Activated CD8-positive, alpha-beta memory T cell treated with anti-CD3 and anti-CD28 coated beads, Interleukin-2, amount 10 ng/mL, durations not matched to agents 7 days and 5 days (primary cell): ENCODE measurements at regions of chr6 and their contacts with region 1.

Region 1: DNA sequence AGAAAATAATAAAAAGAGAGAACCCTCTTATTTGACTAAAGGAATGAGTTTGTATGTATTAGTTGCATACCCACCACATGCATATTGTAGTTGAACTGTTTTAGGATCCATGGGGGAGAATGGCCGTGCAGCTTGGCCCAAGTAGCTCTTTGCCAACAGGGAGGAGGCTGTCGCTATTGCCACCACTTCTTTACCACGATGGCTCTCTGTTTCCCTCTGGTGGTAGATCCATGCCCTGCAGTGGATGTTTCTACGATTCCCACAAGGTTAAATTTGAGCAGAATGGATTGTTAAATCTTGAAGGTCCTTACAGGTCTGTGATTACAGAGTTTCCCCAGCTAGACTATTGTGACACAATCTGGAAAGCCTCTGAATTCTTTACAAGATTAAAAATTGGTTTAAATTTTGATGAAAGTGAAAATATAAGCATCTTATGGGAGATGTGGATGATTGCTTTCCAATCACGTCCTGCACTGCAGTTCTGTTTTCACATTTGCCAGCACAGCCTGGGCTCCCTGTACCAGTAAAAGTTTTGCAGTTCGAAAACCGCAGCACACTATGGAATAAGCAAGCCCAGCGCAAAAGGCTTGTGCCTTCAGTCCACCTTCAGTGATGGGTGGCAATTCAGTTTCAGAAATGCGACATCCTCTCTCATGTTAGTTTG is 34.4 kb upstream of the FNDC1 start:
- DNase-seq: peak; percentile 84
- ATAC-seq: peak; percentile 86
- H3K4me3 Mint-ChIP-seq: no peak overlapping the region
- H3K27ac Mint-ChIP-seq: no peak overlapping the region
- H3K4me1 Mint-ChIP-seq: peaks cover 7% of the 10 kb centered on the region
- H3K27me3 Mint-ChIP-seq: peaks cover 37% of the 10 kb centered on the region

Region 2: DNA sequence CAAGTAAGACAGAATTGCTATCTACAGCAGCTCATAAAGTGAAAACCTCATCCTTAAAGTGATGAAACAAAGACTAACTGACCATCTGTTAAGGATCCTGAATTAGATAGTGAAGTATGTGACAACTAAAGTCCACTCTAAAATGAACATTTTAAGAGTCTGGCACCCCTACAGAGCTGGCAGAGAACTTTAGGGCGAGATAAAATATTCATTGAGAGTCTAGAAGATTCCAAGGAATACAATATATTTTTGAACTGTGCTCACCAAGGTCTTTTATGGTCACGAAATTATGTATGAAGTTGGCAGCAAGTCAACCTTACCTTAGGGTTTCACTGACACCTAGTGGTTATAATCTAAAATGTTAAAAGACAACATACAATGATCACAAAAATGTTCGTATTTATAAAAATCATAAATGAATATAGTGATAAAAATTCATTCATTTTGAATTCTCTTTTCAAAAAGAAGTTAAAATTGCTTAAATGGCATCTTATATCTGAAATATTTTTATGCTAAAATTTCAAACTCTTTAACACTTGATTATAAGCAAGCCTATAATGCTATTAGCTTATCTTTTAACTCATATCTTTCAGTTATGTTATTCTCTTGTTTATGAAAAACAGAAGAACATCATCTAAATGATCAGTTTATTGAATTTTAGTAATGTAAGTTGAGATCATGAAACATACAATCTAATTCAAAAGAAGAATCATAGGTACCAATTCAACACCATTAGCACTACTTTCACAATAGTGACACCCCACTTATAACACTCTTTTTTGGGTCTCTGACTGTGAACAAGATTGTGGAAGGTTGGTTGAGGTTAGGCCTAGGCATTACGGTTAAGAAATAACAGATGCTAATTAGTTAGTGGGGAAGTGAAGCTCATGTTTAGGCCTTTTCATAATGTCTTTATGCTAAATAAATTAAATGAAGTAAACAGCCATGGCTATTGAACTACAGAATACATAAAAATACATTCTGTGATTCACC is 162.3 kb before region 1 on chr6:
- CTCF ChIA-PET with region 1: interaction called, 16 read pairs
- DNase-seq: no peak
- ATAC-seq: peak; percentile 55
- H3K4me3 Mint-ChIP-seq: no peak overlapping the region
- H3K27ac Mint-ChIP-seq: no peak overlapping the region
- H3K4me1 Mint-ChIP-seq: no peaks in the 10 kb centered on the region
- H3K27me3 Mint-ChIP-seq: no peaks in the 10 kb centered on the region

Region 3: DNA sequence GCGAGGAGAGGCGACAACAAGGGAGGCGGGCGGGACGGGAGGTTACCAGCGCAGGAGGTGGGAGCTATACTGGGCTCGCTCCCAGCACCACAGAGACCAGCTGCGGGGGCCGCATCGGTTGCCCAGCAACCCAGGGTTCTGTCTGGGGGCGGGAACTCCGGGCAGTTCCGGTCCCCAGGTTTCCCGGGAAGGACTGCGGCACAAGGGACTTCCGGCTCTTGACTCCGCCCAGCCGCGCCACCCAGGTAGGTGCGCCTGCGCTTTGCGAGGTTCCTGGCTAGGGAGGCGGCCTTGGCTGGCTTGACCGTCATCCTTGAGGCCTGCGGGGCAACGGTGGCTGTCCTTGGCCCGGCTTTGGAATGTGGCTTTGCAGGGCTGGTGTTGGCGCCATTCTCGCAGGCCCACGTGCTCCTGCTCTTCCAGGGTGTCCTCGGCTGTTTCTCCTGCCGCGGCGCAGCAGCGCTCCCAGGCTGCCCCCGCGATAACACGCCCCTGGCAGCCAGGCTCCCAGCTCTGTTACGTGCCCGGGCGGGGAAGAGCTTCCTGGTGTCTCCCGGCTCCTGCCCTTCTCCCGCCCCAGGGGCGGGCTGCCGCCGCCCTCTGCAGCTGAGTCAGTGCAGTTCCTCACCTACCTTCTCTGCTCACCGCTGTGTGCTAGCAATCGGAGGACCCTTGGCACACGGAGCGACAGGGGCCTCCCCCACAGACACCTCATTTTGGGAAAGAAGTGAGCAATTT is 135.0 kb before region 1 on chr6 and contains the start of gene RSPH3:
- CTCF ChIA-PET with region 1: interaction called, 165 read pairs
- DNase-seq: peak; percentile 95
- ATAC-seq: peak; percentile 92
- H3K4me3 Mint-ChIP-seq: peak within 1 kb of the TSS; percentile 93
- H3K27ac Mint-ChIP-seq: peak within 1 kb of the TSS; percentile 71
- H3K4me1 Mint-ChIP-seq: peaks cover 31% of the 10 kb centered on the region
- H3K27me3 Mint-ChIP-seq: no peaks in the 10 kb centered on the region
- total RNA-seq, gene RSPH3: 2.1 TPM

Region 4: GRCh38 chr6:159017757-159018559 is 116.9 kb before region 1 on chr6:
- CTCF ChIA-PET with region 1: interaction called, 18 read pairs
- DNase-seq: no peak
- ATAC-seq: peak; percentile 87
- H3K4me3 Mint-ChIP-seq: no peak overlapping the region
- H3K27ac Mint-ChIP-seq: peak overlapping the region; percentile 69
- H3K4me1 Mint-ChIP-seq: peaks cover 32% of the 10 kb centered on the region
- H3K27me3 Mint-ChIP-seq: no peaks in the 10 kb centered on the region

Region 5: DNA sequence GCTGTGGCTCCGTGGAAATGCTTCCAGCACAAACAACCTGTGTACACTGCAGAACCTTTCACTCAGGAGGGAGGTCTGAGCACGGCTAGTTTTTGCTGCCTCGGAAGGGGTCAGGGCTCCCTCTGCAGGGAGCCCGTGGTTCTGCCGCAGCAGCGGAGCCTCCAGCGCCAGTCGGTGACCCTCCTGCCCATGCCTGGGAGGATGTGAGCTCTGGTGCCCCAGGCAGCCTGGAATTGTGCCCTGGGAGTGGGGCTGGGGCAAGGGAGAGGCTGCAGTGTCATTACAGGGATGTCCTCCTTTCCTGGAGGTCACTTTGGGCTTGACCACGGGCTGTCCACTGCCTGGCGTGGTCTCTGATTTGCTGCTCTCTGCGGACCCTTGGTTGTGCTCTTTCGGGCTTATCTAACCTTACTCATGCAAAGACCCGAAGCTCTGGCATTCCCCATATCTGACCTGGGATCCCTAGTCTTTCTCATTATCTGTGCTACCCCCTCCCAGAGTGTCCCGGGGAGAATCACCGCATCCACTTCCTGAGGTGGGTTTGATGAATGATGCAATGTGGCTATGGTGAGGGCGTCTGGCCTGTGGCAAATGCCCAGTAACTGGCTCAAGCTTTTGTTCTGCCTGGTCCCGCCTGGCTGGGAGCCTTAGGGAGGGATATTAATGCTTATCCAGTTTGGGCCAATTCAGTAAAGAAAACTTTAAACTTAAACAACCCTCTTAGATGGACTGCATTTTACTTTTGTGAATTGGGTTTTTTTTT is 30.5 kb before region 1 on chr6:
- CTCF ChIA-PET with region 1: interaction called, 53 read pairs
- DNase-seq: peak; percentile 86
- ATAC-seq: peak; percentile 70
- H3K4me3 Mint-ChIP-seq: peak overlapping the region; percentile 29
- H3K27ac Mint-ChIP-seq: peak overlapping the region; percentile 92
- H3K4me1 Mint-ChIP-seq: peaks cover 73% of the 10 kb centered on the region
- H3K27me3 Mint-ChIP-seq: no peaks in the 10 kb centered on the region

Region 6: DNA sequence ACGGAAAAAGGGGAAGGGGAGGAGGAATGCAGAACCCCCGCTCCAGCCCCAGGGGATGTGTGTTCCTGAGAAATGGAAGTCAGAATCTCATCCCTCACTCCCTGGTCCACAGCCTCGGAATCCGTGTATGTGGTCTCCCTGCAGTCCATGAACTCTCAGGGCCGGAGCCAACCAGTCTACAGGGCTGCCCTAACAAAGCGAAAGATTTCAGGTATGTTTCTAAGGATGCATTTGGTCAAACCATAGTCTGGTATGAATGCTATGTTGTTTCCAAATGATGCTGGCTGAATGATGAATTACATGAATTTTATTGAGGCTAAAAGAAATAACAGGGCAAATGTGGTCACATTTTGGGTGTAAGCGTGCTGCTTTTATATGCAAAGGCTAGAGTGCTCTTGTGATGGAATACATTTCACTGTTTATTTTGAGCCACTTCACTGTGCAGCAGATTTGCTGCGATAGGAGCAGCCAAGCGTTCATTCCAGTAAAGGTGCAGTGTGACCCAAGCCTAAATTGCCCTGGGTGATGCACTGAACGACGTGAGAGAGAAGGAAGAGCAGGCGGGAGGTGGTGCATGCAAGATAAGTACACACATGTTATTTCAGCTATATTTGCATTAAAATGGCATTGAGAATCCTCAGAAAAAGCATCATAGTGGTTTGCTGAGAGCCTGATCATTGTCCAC is 86.8 kb after region 1 on chr6:
- CTCF ChIA-PET with region 1: no interaction called
- DNase-seq: no peak
- ATAC-seq: no peak
- H3K4me3 Mint-ChIP-seq: no peak overlapping the region
- H3K27ac Mint-ChIP-seq: no peak overlapping the region
- H3K4me1 Mint-ChIP-seq: peaks cover 5% of the 10 kb centered on the region
- H3K27me3 Mint-ChIP-seq: peaks cover 51% of the 10 kb centered on the region